Posterior vena cava (tissue), 2 donors: ENCODE measurements at regions of chr15 and their contacts with region 1.

Region 1: DNA sequence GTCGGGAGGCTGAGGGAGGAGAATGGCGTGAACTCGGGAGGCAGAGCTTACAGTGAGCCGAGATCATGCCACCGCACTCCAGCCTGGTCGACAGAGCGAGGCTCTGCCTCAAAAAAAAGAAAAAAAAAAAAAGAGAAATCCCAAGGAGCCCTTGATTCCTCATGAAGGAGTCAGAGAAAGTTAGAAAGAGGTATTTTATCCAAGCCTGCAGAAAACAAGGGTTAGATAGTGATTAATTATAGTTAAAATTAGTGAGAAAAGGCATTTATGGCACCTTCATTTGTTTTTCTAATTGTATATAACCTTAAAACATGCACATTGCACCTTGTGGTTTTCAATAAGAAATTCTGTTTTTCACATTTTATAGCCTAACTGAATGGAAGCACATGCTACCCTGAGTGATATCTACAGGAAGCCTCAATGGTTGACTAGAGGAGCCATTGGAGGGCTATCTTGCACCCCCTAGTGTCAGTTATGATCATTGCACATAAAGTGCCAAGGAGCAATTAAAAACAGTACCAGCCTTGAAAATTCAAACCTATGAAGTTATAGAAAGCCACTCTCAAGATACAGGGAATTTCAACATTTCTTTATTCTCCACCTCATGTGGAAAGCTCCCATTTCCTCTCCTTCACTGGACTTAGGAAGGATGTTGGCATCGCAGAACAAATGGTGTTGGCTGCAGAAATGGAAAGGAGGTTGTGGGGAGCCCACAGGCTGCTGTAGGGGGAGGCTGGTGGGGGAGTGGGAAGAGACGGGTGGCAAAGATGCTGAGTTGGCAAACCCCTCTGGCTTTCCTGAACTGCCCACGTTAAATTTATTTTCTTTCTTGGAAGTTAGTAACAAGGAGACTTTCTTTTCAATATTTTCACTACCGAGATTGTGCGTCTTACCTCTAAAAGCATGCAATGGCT is 48.5 kb downstream of the ITGA11 start:
- DNase-seq: peak; percentile 23

Region 2: GRCh38 chr15:68365140-68365745 is 18.2 kb before region 1 on chr15:
- intact Hi-C with region 1: no loop called
- DNase-seq: no peak

Region 3: GRCh38 chr15:69489073-69489571 is 1105.7 kb after region 1 on chr15:
- intact Hi-C with region 1: loop called in 1 of 2 experiments (anchors 5 kb)
- DNase-seq: no peak